PC-3 (cell line): ENCODE measurements at regions of chr11 and their contacts with region 1.

Region 1: DNA sequence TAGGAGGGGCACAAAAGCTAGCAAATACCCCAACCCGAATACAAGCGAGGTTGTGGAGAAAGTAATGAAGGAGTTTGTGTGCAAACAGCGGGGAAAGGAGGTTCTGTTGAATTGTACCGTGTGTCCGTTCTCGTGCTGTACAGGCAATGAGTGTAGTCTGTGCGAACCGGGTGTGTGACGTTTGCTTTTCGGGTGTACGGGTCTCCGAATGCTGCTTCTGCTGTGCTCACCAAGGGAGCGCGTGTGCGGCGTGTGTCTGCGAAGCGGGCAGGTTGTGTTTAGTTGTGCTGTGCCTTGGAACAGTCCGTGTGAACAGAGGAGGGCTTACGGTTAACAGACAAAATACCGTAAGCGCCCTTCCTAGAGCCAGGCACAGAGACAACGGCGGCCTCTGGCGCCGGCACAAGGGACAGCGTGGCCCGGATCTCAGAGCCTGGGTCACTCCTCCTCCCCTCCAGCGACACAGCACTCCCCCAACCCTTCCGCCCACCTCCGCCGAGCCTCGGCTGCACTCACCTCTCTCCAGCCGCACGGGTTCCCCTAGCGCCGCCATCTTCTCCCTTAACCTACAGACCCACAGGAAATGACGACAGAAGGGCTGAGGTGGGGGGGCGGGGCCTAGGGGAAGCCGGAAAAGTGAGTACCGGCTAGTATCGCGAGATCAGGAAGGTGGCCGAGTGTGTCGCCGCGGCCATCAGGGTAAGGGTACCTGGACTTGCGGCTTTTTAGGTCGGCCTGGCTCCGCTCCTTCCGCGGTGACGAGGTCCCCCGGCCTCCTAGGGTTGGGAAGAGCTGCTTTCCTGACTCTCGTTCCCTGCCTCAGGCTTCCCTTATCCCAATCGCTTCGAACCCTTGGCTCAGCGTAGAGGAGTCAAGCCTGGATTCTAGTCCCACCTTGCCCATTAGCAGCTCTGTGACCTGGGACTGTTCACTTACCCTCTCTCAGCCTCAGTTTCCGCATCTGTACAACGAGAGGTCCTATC is at the start of gene LIN7C:
- DNase-seq: peak; percentile 92
- ATAC-seq: peak; percentile 96
- H3K4me3 ChIP-seq: peak within 1 kb of the TSS; percentile 87
- H3K27ac ChIP-seq: peak within 1 kb of the TSS; percentile 53
- H3K4me1 ChIP-seq: peaks cover 16% of the 10 kb centered on the region
- H3K27me3 ChIP-seq: no peaks in the 10 kb centered on the region
- CTCF ChIP-seq: no peak
- total RNA-seq, gene LIN7C: 21.7 and 26.6 TPM in 2 replicates

Region 2: GRCh38 chr11:27353593-27354358 is 152.7 kb before region 1 on chr11:
- CTCF ChIA-PET with region 1: no interaction called
- POLR2A ChIA-PET with region 1: no interaction called
- intact Hi-C with region 1: no loop called
- DNase-seq: no peak
- ATAC-seq: no peak
- H3K4me3 ChIP-seq: no peak overlapping the region
- H3K27ac ChIP-seq: no peak overlapping the region
- H3K4me1 ChIP-seq: 0 out of 2 replicates have a peak, but pooled peaks cover under 1% of the 10 kb centered on the region
- H3K27me3 ChIP-seq: no peaks in the 10 kb centered on the region
- CTCF ChIP-seq: no peak

Region 3: DNA sequence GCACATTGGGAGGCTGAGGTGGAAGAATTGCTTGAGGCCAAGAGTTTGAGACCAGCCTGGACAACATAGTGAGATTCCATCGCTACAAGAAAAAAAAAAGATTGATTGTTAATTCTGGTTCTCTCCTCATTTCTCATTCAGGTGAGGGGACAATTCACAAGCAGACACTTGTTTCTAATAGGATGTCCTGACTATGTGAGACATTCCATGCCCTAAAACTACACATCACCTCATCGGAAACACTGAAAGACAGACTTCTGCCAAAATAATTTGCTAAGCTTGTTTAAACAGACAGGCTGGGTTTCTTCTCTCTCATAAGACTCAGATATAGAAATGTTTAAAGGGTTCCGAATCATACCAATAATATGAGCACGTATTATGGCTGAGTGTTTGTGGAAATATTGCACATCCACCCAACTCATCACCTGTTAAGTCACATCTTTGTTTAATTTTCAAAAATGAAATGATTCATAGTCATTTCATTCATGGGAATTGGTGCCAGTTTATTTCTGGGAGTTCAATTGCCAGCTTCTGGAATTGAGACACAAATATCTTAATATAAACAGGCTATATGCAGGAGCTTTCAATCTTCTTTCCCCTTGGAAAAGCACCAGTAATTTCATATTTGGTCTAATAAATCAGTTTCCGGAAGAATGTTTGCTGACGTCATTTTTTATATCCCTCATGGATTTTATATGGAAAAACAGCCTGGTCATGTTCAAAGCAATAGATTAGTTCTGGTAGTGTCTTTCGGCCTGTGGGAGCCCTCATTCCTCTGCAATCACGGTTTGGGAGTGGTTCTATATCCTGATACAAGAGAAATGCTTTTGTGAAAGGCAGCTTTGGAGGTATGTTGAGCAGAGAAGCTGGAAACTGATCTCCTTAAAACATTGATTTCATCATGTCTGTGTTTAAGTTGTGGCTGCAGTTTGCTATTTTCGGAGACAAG is 106.7 kb after region 1 on chr11:
- CTCF ChIA-PET with region 1: no interaction called
- POLR2A ChIA-PET with region 1: no interaction called
- intact Hi-C with region 1: loop called (anchors 5 kb)
- DNase-seq: peak; percentile 61
- ATAC-seq: peak; percentile 89
- H3K4me3 ChIP-seq: no peak overlapping the region
- H3K27ac ChIP-seq: peak overlapping the region; percentile 86
- H3K4me1 ChIP-seq: peaks cover 14% of the 10 kb centered on the region
- H3K27me3 ChIP-seq: no peaks in the 10 kb centered on the region
- CTCF ChIP-seq: no peak